ENCODE measurements at regions of chr3 and their contacts with region 1.

Region 1: DNA sequence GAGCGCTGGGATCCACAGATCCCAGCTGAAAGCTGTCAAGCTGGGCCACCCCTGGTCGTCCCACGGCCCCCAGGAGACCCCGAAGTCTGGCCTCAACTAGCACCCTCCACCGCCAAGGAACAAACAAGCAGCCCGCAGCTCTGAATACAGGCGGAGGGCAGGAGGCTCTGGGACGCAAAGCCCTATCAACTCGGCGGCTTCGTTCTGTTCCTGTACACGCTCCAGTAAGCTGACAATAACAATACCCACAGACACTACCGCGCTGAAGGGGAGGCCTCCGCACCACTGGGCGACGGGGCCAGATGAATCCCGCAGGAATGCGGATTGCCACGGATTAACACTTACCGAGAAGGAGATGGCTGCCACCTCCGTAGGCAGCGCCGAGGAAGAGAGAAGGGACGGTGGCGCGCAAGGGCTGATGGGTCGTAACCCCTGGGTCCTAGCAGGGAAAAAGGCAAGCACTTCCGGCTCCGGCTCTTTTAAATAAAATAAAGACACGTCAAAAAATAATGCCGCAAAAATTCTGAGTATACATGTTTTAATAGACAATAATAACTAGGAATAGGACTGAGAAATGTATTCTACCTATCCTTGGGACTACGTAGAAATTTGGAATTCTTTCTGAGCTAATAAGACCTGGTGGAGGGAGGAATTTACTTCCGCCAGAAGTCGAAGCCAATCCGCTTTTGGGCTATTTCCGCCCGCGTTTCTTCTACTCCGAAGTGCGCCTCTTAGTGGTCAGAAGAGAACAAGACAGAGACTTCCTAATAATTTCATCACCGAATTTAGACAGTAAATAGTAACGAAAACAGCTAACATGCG is at the start of gene RPL32:
- DNase-seq: peak; percentile 83
- H3K4me3 ChIP-seq: peak within 1 kb of the TSS; percentile 98
- CTCF ChIP-seq: peak; percentile 66

Region 2: GRCh38 chr3:12706504-12707253 is 134.7 kb before region 1 on chr3:
- CTCF ChIA-PET with region 1: interaction called, 17 read pairs
- POLR2A ChIA-PET with region 1: no interaction called
- DNase-seq: no peak
- H3K4me3 ChIP-seq: no peak overlapping the region
- CTCF ChIP-seq: peak; percentile 79

Region 3: DNA sequence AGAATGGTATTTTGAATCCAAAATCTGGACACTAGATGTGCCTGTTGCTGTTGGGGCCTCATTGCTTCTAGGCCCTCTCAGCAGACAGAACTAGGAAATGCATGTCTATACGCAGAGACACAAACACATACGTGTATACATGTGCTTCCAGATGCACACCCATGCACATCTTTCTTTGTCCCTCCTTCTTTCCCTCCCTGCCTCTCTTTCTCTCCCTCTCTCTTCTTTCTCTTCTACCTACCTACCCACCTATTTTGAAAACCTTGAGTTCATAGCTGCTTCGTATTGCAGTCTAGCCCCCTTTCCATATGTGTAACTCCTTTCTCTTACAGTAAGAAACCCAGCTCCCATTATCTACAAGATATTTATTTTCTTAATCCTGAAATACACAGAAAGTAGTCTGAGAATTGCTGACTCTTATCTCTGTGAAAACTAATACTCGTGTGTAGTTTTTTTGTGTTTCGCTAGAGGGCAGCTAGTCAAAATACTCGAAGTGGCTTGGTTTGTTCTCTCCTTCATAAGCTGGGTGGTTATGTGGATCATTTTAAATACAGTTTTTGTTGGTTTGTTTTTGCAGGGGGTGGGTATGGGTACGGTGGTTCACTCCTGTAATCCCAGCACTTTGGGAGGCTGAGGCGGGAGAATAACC is 18.5 kb before region 1 on chr3:
- CTCF ChIA-PET with region 1: interaction called, 85 read pairs
- POLR2A ChIA-PET with region 1: interaction called, 3 read pairs
- DNase-seq: no peak
- H3K4me3 ChIP-seq: no peak overlapping the region
- CTCF ChIP-seq: no peak

Region 4: DNA sequence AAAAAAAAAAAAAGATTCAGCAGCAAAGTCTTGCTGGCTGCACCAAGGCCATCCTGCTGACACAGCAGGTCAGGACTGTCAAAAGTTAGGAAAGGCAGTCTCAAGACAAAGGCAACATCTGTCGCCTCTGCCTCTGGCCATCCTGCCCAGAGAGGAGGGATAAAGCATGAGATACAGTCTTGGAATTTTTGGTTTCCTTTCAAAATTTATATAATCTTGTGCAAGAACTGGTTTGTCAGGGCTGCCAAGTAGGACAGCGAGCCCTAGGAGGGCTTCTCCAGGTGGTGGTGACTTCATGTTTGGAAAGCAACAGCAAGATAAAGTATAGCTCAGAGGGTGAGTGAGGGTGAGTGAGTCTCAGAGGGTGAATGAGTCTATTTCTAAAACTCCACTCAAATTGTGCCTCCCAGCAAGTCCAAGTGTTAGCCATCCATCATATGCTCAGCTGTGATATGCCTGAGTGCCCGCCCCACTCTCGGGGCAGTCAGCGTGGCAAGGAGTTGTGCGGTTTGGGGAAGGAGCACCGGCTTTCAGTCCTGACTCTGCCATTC is 11.9 kb after region 1 on chr3:
- CTCF ChIA-PET with region 1: interaction called, 44 read pairs
- POLR2A ChIA-PET with region 1: no interaction called
- DNase-seq: peak; percentile 9
- H3K4me3 ChIP-seq: no peak overlapping the region
- CTCF ChIP-seq: no peak

Region 5: GRCh38 chr3:12875857-12876836 is 34.8 kb after region 1 on chr3:
- CTCF ChIA-PET with region 1: interaction called, 10 read pairs
- POLR2A ChIA-PET with region 1: no interaction called
- DNase-seq: no peak
- H3K4me3 ChIP-seq: peak overlapping the region; percentile 39
- CTCF ChIP-seq: peak; percentile 34

Region 6: DNA sequence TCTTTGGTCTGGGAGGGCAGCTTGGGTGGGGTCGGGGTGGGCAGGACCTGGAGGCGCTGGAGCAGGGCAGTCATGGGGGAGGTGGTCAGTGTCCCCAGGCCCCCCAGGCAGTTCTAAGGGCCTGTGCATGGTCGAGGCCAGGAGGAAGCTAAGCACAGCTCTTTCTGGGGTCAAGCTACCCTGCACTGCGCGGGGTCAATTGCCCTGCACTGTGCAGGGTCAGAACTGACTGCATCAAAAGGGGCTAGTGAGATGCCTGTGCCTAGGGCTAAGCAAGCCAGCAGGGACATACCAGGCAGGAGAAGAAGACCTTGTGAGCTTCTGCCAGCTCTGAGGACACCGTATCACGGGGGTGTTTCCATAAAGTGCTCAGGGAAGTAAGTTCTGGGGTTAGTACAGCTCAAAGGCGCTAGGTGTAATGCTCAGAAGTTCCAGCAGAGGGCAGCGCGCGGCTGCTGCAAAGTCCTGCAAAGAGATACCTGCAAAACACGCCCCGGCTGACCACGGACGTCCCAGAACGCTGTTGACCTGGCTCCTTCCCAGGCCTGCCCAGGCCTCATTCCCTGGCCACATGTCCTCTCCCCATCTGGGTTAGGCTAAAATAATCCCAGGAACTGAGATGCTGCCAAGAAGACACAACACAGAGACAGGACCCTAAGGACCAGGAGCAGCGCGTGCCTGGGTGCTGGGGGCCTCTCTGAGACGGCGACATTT is 250.7 kb after region 1 on chr3:
- CTCF ChIA-PET with region 1: no interaction called
- POLR2A ChIA-PET with region 1: no interaction called
- DNase-seq: no peak
- H3K4me3 ChIP-seq: no peak overlapping the region
- CTCF ChIP-seq: peak; percentile 83